ENCODE measurements at regions of chr7 and their contacts with region 1.

Region 1: GRCh38 chr7:1579481-1580421 is 9.9 kb upstream of the PSMG3 start:
- DNase-seq: peak; percentile 69 to 86
- H3K4me3 ChIP-seq: no peak overlapping the region
- H3K4me3 Mint-ChIP-seq: no peak overlapping the region
- H3K27ac Mint-ChIP-seq: no peak overlapping the region
- H3K4me1 ChIP-seq: 0 out of 2 replicates have a peak, but pooled peaks cover 3% of the 10 kb centered on the region
- H3K4me1 Mint-ChIP-seq: peaks cover 11% of the 10 kb centered on the region
- H3K27me3 ChIP-seq: no peaks in the 10 kb centered on the region
- H3K27me3 Mint-ChIP-seq: peaks cover 10% of the 10 kb centered on the region
- CTCF ChIP-seq: peak; percentile 91 to 94

Region 2: DNA sequence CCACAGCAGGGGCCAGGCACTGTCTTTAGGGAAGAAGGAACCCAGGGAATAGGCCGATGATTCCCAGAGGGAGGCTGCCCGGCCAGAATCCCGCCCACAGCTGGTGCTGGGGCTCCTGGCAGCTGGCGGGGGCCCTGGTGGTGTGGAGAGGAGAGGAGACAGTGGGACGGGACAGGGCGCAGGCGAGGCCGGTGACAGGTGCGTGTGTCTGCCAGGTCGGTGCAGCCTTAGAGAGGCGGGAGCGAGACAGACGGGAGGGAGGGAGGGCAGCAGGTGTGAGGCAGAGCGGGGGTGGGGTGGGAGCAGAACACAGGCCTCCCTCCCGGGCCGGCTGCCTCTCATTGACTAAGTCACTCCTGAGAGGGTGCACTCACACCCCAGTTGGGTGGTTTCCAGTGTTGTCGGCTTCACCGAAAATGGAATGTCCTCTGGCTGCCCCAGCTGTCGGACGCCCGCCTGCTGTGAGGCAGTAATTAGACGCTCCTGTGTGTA is 145.5 kb after region 1 on chr7:
- CTCF ChIA-PET with region 1: no interaction called
- POLR2A ChIA-PET with region 1: no interaction called
- intact Hi-C with region 1: no loop called
- DNase-seq: no peak
- H3K4me3 ChIP-seq: no peak overlapping the region
- H3K4me3 Mint-ChIP-seq: no peak overlapping the region
- H3K27ac Mint-ChIP-seq: no peak overlapping the region
- H3K4me1 ChIP-seq: no peaks in the 10 kb centered on the region
- H3K4me1 Mint-ChIP-seq: no peaks in the 10 kb centered on the region
- H3K27me3 ChIP-seq: no peaks in the 10 kb centered on the region; the same call in 1 of the 2 replicates
- H3K27me3 Mint-ChIP-seq: peaks cover 4% of the 10 kb centered on the region
- CTCF ChIP-seq: no peak

Region 3: DNA sequence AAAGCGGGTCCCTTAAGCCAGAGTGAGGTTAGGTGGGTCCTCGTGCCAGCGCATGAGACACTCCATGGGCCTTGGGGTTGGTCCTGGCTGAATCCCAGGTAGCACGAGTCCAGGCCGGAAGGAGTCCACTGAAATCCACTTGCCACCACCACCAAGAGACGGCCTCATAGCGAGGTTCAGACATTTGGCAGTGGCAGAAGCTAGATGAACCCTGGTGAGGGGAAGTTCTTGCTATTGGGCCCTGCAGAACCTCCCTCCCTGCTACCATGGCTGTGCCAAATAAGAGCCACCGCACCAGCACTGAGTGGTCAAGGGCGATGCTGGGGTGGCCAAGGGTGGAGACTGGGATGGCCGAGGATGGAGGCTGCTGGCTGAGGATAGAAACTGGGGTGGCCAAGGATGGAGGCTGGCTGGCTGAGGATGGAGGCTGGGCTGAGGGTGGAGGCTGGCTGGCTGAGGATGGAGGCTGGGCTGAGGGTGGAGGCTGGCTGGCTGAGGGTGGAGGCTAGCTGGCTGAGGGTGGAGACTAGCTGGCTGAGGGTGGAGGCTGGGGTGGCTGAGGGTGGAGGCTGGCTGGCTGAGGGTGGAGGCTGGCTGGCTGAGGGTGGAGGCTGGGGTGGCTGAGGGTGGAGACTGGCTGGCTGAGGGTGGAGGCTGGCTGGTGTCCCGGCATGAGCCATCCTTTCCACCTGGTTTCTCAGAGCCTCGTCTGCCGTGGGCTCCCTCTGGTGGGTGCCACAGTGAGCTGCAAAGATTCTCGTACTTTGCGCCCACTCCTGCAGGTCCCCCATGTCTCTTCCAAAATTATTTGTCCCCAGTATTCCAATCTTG is 178.5 kb after region 1 on chr7:
- CTCF ChIA-PET with region 1: no interaction called
- POLR2A ChIA-PET with region 1: no interaction called
- intact Hi-C with region 1: loop called (anchors 5 kb)
- DNase-seq: peak in 1 of 2 experiments; percentile 48
- H3K4me3 ChIP-seq: no peak overlapping the region
- H3K4me3 Mint-ChIP-seq: no peak overlapping the region
- H3K27ac Mint-ChIP-seq: no peak overlapping the region
- H3K4me1 ChIP-seq: peaks cover 7% of the 10 kb centered on the region; the same call in 1 of the 2 replicates
- H3K4me1 Mint-ChIP-seq: no peaks in the 10 kb centered on the region
- H3K27me3 ChIP-seq: no peaks in the 10 kb centered on the region
- H3K27me3 Mint-ChIP-seq: no peaks in the 10 kb centered on the region
- CTCF ChIP-seq: peak; percentile 37 to 77

Region 4: GRCh38 chr7:1883031-1883761 is 303.4 kb after region 1 on chr7:
- CTCF ChIA-PET with region 1: no interaction called
- POLR2A ChIA-PET with region 1: interaction called, 13 read pairs
- intact Hi-C with region 1: no loop called
- DNase-seq: no peak
- H3K4me3 ChIP-seq: no peak overlapping the region
- H3K4me3 Mint-ChIP-seq: no peak overlapping the region
- H3K27ac Mint-ChIP-seq: no peak overlapping the region
- H3K4me1 ChIP-seq: no peaks in the 10 kb centered on the region
- H3K4me1 Mint-ChIP-seq: peaks cover 7% of the 10 kb centered on the region
- H3K27me3 ChIP-seq: no peaks in the 10 kb centered on the region
- H3K27me3 Mint-ChIP-seq: no peaks in the 10 kb centered on the region
- CTCF ChIP-seq: no peak